ENCODE measurements at regions of chr1 and their contacts with region 1.

Region 1: DNA sequence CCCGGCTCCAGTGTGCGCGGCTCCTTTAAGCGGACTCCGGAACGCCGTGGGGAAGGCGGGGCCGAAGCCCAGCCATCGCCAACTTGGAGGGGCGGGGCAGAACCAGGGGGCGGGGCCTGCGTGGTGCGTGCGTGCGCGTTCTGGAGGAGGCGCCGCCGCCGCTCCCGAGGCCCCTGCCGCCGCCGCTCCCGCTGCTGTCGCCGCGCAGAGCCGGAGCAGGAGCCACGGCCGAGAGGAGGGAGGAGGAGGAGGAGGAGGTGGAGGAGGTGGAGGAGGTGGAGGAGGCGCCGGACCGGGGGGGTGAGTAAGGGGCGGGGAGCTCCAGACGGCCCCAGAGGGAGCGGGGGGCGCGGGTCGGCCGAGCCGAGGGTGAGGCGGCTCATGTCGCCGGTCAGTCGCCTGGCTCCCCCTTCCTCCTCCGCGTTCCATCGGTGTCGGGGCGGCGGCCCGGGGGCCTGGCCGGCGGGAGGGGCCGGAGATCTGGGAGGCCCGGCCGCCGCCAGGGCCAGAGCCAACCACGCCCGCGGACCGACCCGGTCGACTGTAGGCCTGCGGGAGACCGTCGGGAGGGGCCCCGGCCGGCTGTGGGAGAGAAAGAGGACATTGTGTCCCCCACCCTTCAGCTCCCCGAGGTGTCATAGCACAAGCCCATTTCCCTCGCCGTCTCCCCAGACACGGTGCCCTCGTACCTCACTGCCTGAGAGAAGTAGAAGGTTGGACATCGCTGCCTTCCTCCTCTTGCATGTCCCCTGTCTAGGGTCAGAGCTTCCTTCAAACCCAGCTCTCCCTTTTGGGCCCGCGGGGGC is at the start of gene RAP1A:
- DNase-seq: peak; percentile 80 to 95 (median 90)
- ATAC-seq: peak; percentile 93
- H3K4me3 ChIP-seq: peak within 1 kb of the TSS; percentile 88
- H3K4me3 Mint-ChIP-seq: peak within 1 kb of the TSS; percentile 93 to 99 (median 96)
- H3K27ac ChIP-seq: peak within 1 kb of the TSS; percentile 91
- H3K27ac Mint-ChIP-seq: peak within 1 kb of the TSS; percentile 86 to 98 (median 95)
- H3K4me1 ChIP-seq: peaks cover 46 to 64% of the 10 kb centered on the region in 2 donors
- H3K4me1 Mint-ChIP-seq: peaks cover 57 to 82% (median 76%) of the 10 kb centered on the region in 7 donors
- H3K27me3 ChIP-seq: no peaks in the 10 kb centered on the region
- H3K27me3 Mint-ChIP-seq: no peaks in the 10 kb centered on the region
- total RNA-seq, gene RAP1A: 89.8 to 183 (median 107) TPM

Region 2: GRCh38 chr1:111448918-111449702 is 170.7 kb before region 1 on chr1 and contains the starts of genes ATP5PB and WDR77:
- CTCF ChIA-PET with region 1: no interaction called
- POLR2A ChIA-PET with region 1: no interaction called
- intact Hi-C with region 1: loop called in 1 of 2 experiments (anchors 1 kb)
- DNase-seq: peak; percentile 66 to 97 (median 94)
- ATAC-seq: peak; percentile 98
- H3K4me3 ChIP-seq: peak within 1 kb of the TSS; percentile 89
- H3K4me3 Mint-ChIP-seq: peak within 1 kb of the TSS; percentile 97 to 100 (median 100)
- H3K27ac ChIP-seq: peak within 1 kb of the TSS; percentile 98
- H3K27ac Mint-ChIP-seq: peak within 1 kb of the TSS; percentile 95 to 100 (median 99)
- H3K4me1 ChIP-seq: peaks cover 51 to 55% of the 10 kb centered on the region in 2 donors
- H3K4me1 Mint-ChIP-seq: peaks cover 43 to 92% (median 78%) of the 10 kb centered on the region in 7 donors
- H3K27me3 ChIP-seq: no peaks in the 10 kb centered on the region
- H3K27me3 Mint-ChIP-seq: no peaks in the 10 kb centered on the region
- total RNA-seq, gene ATP5PB: 64.9 to 298 (median 98.7) TPM
- total RNA-seq, gene WDR77: 20.7 to 39.9 (median 29.5) TPM

Region 3: DNA sequence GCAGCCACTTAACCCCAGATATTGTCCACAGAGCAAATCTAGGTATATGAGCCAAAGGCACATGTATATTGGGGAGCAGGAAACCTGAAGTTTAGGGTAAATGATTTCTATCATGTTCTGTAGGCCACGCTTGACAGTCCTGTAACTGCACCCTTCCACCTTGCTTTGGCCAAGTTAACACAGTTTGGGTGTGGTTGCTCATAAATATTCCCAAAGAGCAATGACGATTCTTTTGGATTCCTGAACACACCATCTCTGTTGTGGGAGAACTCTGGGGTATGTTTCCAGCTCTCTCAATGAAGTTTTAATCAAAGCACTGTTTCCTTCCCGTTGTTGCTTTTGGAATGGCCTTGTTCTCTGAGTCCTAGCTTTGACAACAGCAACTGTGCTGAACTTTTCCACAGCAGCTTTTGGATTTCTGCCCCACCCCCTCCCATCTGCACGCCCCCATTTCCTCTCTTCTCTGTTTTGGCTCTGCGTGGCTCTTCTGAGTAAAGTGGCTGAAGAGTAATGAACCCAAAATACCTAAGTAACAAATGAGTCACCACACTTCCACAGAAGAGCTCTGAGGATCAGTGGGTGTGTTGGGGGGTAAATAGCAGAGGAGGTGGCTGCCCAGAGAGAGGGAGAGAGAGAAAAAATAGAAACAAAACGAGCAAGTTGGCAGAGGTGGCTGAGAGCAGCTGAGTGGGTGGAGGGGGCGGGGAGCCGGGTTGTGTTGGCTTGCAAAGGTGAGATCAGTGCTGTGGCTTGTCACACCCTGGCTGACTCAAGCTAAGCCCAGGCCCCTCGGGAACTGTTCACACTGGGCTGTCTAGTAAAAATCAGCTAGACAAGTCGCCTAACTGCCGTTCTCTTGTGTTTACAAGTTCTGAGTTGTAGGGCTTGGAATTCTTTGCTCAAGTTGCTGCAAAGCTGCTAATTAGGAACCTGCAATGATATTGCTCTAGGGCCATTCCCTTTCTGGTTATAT is 27.2 kb before region 1 on chr1:
- CTCF ChIA-PET with region 1: interaction called, 6 read pairs
- POLR2A ChIA-PET with region 1: interaction called, 173 read pairs
- intact Hi-C with region 1: loop called (anchors 1 kb)
- DNase-seq: peak; percentile 22 to 86 (median 56)
- ATAC-seq: peak; percentile 91
- H3K4me3 ChIP-seq: peak overlapping the region; percentile 29
- H3K4me3 Mint-ChIP-seq: peak overlapping the region; percentile 52 to 82 (median 78)
- H3K27ac ChIP-seq: peak overlapping the region; percentile 62
- H3K27ac Mint-ChIP-seq: peak overlapping the region; percentile 83 to 95 (median 91)
- H3K4me1 ChIP-seq: peaks cover 55 to 65% of the 10 kb centered on the region in 2 donors
- H3K4me1 Mint-ChIP-seq: peaks cover 46 to 72% (median 62%) of the 10 kb centered on the region in 7 donors
- H3K27me3 ChIP-seq: no peaks in the 10 kb centered on the region
- H3K27me3 Mint-ChIP-seq: peaks cover 0 to 2% (median 0%) of the 10 kb centered on the region in 5 donors

Region 4: GRCh38 chr1:111639602-111640198 is 19.9 kb after region 1 on chr1:
- CTCF ChIA-PET with region 1: no interaction called
- POLR2A ChIA-PET with region 1: interaction called, 6 read pairs
- intact Hi-C with region 1: loop called in 1 of 2 experiments (anchors 2 kb)
- DNase-seq: no peak
- ATAC-seq: no peak
- H3K4me3 ChIP-seq: no peak overlapping the region
- H3K4me3 Mint-ChIP-seq: peak overlapping the region in 1 of 10 donors; percentile 21
- H3K27ac ChIP-seq: no peak overlapping the region
- H3K27ac Mint-ChIP-seq: peak overlapping the region in 5 of 9 donors; percentile 28 to 59 (median 44)
- H3K4me1 ChIP-seq: peaks cover 37 to 41% of the 10 kb centered on the region in 2 donors
- H3K4me1 Mint-ChIP-seq: peaks cover 43 to 85% (median 75%) of the 10 kb centered on the region in 7 donors
- H3K27me3 ChIP-seq: no peaks in the 10 kb centered on the region
- H3K27me3 Mint-ChIP-seq: no peaks in the 10 kb centered on the region

Region 5: DNA sequence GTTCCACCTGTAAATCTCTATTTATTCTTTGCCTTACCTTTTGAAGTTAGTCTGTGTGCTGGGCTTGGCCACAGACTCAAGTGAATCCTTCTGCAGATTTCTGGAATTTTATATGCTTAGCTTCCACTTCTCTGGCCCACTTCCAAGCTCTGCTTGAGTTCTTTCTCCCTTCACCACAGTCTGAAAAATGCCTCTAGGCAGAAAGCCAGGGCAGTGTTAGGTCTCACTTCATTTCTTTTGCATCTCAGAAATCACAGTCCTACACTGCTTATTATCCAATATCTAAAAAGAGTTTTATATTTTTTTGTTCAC is 70.4 kb after region 1 on chr1:
- CTCF ChIA-PET with region 1: no interaction called
- POLR2A ChIA-PET with region 1: interaction called, 4 read pairs
- intact Hi-C with region 1: loop called in 1 of 2 experiments (anchors 5 kb)
- DNase-seq: no peak
- ATAC-seq: no peak
- H3K4me3 ChIP-seq: no peak overlapping the region
- H3K4me3 Mint-ChIP-seq: peak overlapping the region in 5 of 10 donors; percentile 7 to 55 (median 16)
- H3K27ac ChIP-seq: peak overlapping the region; percentile 35
- H3K27ac Mint-ChIP-seq: peak overlapping the region in 8 of 9 donors; percentile 30 to 88 (median 55)
- H3K4me1 ChIP-seq: peaks cover 8 to 12% of the 10 kb centered on the region in 2 donors
- H3K4me1 Mint-ChIP-seq: peaks cover 40 to 86% (median 73%) of the 10 kb centered on the region in 7 donors
- H3K27me3 ChIP-seq: no peaks in the 10 kb centered on the region
- H3K27me3 Mint-ChIP-seq: no peaks in the 10 kb centered on the region

Region 6: GRCh38 chr1:111920221-111921024 is 300.6 kb after region 1 on chr1:
- CTCF ChIA-PET with region 1: no interaction called
- POLR2A ChIA-PET with region 1: no interaction called
- intact Hi-C with region 1: no loop called
- DNase-seq: no peak
- ATAC-seq: no peak
- H3K4me3 ChIP-seq: no peak overlapping the region
- H3K4me3 Mint-ChIP-seq: no peak overlapping the region
- H3K27ac ChIP-seq: no peak overlapping the region
- H3K27ac Mint-ChIP-seq: no peak overlapping the region
- H3K4me1 ChIP-seq: no peaks in the 10 kb centered on the region
- H3K4me1 Mint-ChIP-seq: peaks cover 0 to 5% (median 0%) of the 10 kb centered on the region in 7 donors
- H3K27me3 ChIP-seq: no peaks in the 10 kb centered on the region
- H3K27me3 Mint-ChIP-seq: peaks cover 19 to 44% (median 40%) of the 10 kb centered on the region in 5 donors

Measured in naive thymus-derived CD4-positive, alpha-beta T cell (primary cell).